ENCODE measurements at regions of chr1 and their contacts with region 1.

Region 1: GRCh38 chr1:28208818-28209441 is 23.9 kb downstream of the DNAJC8 start:
- DNase-seq: peak in 1 of 2 experiments; percentile 53
- H3K4me3 ChIP-seq: no peak overlapping the region
- H3K27ac ChIP-seq: no peak overlapping the region
- H3K4me1 ChIP-seq: no peaks in the 10 kb centered on the region
- H3K27me3 ChIP-seq: no peaks in the 10 kb centered on the region
- CTCF ChIP-seq: peak in 2 of 3 experiments; percentile 77 to 79; a peak in 3 of 4 replicates
- EP300 ChIP-seq: no peak
- POLR2A ChIP-seq: no peak
- RAD21 ChIP-seq: peak; percentile 89 to 91

Region 2: GRCh38 chr1:28193701-28194161 is 15.2 kb before region 1 on chr1:
- CTCF ChIA-PET with region 1: interaction called, 13 read pairs
- POLR2A ChIA-PET with region 1: interaction called, 3 read pairs
- DNase-seq: peak; percentile 44 to 62
- H3K4me3 ChIP-seq: no peak overlapping the region
- H3K27ac ChIP-seq: no peak overlapping the region
- H3K4me1 ChIP-seq: peaks cover 11 to 34% (median 22%) of the 10 kb centered on the region in 4 experiments
- H3K27me3 ChIP-seq: no peaks in the 10 kb centered on the region
- CTCF ChIP-seq: no peak
- EP300 ChIP-seq: no peak
- POLR2A ChIP-seq: peak in 1 of 2 experiments; percentile 46; a peak in 1 of 3 replicates
- RAD21 ChIP-seq: no peak

Region 3: DNA sequence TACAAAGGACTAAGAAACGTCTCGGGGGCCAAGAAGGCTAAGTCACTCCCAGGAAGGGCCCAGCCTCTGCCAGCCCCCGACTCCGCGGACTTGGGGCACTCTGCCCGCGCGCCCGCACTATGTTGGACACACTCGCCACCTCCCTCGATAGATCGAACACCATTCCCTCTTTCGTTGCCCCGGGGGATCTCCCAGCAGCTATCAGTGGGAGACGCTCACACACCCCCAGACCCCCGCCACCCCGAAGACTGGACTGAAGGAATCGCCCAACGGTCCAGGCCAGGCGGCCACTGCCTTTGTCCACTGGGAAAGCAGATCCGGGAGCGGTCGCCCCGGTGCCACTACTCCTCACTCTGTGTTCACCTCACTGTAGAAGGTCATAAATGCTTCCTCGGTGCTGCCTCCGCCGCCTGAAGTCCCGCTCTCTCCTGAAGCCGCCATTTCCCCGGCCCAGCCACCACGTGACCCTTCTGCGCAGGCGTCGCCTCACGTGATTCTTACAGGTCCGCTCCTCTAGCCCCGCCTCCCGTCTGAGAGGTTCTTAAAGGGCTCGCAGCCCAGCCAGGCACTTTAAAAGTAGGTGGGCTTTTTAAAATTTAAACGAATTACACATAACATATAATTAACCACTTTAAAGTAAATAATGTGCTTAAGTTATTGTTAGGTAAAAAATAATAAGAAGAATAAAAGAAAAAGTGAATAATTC is 23.8 kb after region 1 on chr1 and contains the start of gene DNAJC8:
- CTCF ChIA-PET with region 1: no interaction called
- POLR2A ChIA-PET with region 1: no interaction called
- DNase-seq: peak in 1 of 2 experiments; percentile 91
- H3K4me3 ChIP-seq: peak within 1 kb of the TSS; percentile 86 to 97 (median 96)
- H3K27ac ChIP-seq: peak within 1 kb of the TSS; percentile 62
- H3K4me1 ChIP-seq: peaks cover 0 to 4% (median 4%) of the 10 kb centered on the region in 4 experiments; a peak in 4 of 7 replicates
- H3K27me3 ChIP-seq: no peaks in the 10 kb centered on the region
- CTCF ChIP-seq: no peak
- EP300 ChIP-seq: peak in 1 of 2 experiments; percentile 14; a peak in 1 of 3 replicates
- POLR2A ChIP-seq: peak in 1 of 2 experiments; percentile 82; a peak in 2 of 3 replicates
- RAD21 ChIP-seq: no peak
- total RNA-seq, gene DNAJC8: 129 and 134 TPM in 2 replicates